Calu3 (cell line): ENCODE measurements at regions of chr18 and their contacts with region 1.

Region 1: GRCh38 chr18:27599202-27599829 is 414.2 kb upstream of the CHST9 start:
- DNase-seq: peak; percentile 70
- H3K4me3 Mint-ChIP-seq: no peak overlapping the region
- H3K27ac Mint-ChIP-seq: no peak overlapping the region
- H3K4me1 Mint-ChIP-seq: peaks cover 3% of the 10 kb centered on the region
- H3K27me3 Mint-ChIP-seq: no peaks in the 10 kb centered on the region
- CTCF ChIP-seq: peak; percentile 82

Region 2: GRCh38 chr18:26813043-26813442 is 786.3 kb before region 1 on chr18:
- CTCF ChIA-PET with region 1: no interaction called
- intact Hi-C with region 1: loop called (anchors 2 kb)
- DNase-seq: peak; percentile 54
- H3K4me3 Mint-ChIP-seq: no peak overlapping the region
- H3K27ac Mint-ChIP-seq: no peak overlapping the region
- H3K4me1 Mint-ChIP-seq: peaks cover 30% of the 10 kb centered on the region
- H3K27me3 Mint-ChIP-seq: no peaks in the 10 kb centered on the region
- CTCF ChIP-seq: peak; percentile 61